Activated T-helper 2 cell treated with anti-CD3 and anti-CD28 coated beads, Interferon-gamma antibody, Interleukin-2, Interleukin-4, amounts not matched to agents 10 μg/mL and 5 μg/mL and 100 μg/mL, durations not matched to agents 14 hours and 24 hours and 36 hours (primary cell): ENCODE measurements at regions of chr6 and their contacts with region 1.

Region 1: GRCh38 chr6:79078075-79079025 is at the start of gene PHIP:
- DNase-seq: peak; percentile 91
- H3K4me3 Mint-ChIP-seq: peak within 1 kb of the TSS; percentile 90
- H3K27ac Mint-ChIP-seq: peak within 1 kb of the TSS; percentile 97
- H3K4me1 Mint-ChIP-seq: peaks cover 35% of the 10 kb centered on the region
- H3K27me3 Mint-ChIP-seq: peaks cover 16% of the 10 kb centered on the region
- total RNA-seq, gene PHIP: 35.2 TPM in 2 replicates

Region 2: DNA sequence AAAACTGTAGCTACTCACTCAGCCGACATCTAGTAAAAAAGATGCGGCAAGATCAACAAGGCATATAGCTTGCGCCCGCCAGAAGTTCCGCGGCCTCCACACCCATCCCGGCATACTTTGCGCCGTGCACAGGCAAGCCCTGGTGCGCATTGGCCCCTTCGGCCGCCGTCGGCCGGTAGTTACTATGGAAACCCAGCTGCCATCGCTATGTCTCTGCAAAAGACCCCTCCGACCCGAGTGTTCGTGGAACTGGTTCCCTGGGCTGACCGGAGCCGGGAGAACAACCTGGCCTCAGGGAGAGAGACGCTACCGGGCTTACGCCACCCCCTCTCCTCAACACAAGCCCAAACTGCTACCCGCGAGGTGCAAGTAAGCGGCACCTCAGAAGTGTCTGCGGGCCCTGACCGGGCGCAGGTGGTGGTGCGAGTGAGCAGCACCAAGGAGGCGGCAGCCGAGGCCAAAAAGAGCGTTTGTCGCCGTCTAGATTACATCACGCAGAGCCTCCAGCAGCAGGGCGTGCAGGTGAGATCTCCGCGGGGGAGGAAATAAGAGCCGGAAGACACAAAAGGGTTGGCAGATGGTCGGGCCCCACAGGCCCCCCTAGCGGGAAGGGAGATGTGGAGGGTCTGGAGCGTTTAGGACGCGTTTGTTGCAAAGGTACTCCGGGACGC is 210.8 kb before region 1 on chr6 and contains the start of gene IRAK1BP1:
- intact Hi-C with region 1: loop called (anchors 1 kb)
- DNase-seq: peak; percentile 82
- H3K4me3 Mint-ChIP-seq: peak within 1 kb of the TSS; percentile 90
- H3K27ac Mint-ChIP-seq: peak within 1 kb of the TSS; percentile 93
- H3K4me1 Mint-ChIP-seq: peaks cover 12% of the 10 kb centered on the region
- H3K27me3 Mint-ChIP-seq: no peaks in the 10 kb centered on the region
- total RNA-seq, gene IRAK1BP1: 2.3 and 2.6 TPM in 2 replicates

Region 3: DNA sequence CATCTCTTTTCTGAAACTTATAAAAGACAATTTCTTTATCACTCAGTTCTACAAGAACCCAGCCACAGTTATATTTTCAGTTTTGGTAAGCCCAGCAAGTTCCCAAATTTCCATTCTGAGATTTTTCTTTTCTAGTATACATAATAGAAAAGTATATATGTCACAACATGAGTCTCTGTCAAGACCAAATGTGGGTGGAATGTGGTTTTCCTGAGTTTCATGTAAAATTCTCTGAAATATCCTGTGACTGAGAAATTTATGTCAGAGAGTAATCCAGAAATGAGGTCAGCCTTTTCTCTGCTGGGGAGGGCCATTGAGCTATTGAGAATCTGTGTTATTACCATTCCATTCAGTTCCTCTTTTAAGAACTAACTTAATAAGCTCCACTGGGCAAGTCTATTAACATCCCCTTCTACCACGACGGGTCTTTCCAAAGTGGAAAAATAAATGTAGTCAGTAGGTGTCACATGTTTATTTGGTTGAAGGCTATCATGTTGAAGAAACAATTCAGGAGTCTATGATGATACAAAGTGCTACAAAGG is 256.9 kb after region 1 on chr6:
- intact Hi-C with region 1: loop called (anchors 10 kb)
- DNase-seq: no peak
- H3K4me3 Mint-ChIP-seq: no peak overlapping the region
- H3K27ac Mint-ChIP-seq: no peak overlapping the region
- H3K4me1 Mint-ChIP-seq: peaks cover 21% of the 10 kb centered on the region
- H3K27me3 Mint-ChIP-seq: peaks cover 2% of the 10 kb centered on the region

Region 4: DNA sequence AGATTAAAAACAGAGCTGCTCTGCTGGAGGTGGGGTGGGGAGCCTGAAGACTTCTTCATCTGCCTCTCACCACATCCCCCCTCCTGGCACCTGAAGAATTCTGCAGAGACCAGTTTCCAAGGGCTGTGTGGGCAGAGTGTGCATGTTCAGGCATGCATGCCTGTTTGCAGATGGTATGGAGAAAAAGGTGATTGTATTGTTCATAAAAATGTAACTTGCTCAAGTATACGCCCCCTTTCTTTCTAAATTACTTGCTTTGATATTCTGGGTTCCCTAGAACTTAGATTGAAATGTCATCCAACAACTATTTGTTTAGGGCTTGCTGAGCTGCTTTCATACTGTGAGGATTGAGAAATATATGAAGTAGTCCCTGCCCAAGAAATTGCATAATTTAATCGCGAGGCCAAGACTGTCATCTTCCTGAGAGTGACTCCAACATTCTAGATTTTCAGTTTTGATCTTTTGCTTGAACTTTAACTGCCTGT is 375.2 kb after region 1 on chr6:
- intact Hi-C with region 1: loop called (anchors 5 kb)
- DNase-seq: no peak
- H3K4me3 Mint-ChIP-seq: no peak overlapping the region
- H3K27ac Mint-ChIP-seq: peak overlapping the region; percentile 50
- H3K4me1 Mint-ChIP-seq: peaks cover 7% of the 10 kb centered on the region
- H3K27me3 Mint-ChIP-seq: no peaks in the 10 kb centered on the region

Region 5: DNA sequence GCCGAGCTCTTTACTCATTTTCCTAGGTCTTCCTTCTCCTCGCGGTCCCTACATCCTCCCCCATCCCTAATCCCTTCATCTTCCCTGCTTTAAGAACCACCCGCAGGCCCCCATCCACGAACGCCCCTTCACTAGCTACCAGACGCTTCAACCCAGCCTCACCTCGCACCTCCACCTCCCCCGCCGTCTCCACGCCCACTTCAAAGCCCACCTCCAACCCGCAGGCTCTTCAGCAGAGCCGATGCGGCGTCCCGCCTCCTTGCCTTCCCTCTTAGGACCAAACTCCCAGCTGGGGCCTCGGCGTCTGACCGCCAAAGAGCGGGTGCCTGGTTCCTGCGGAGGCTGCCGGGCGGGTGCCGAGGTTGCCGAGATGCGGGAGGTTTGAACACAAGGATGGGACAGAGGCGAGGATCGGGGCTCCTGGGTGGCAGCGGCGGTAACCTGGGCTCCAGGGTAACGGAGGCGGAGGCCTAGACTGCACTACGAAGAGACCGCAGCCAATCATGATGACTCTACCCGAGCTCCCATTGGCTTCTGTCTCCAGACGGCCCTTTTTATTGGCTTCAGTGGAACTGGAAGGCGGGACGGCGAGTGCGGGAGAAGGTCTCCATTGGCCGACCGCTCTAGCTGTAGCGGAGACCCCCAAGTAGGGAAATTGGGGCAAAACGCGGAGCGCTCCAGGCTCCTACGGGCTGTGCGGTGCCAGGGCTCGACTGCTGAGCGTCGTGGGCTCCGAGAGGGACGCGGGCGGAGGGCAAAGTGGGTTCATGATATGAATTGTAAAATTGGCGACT is 458.8 kb after region 1 on chr6 and contains the start of gene LCA5:
- intact Hi-C with region 1: loop called (anchors 2 kb)
- DNase-seq: peak; percentile 82
- H3K4me3 Mint-ChIP-seq: no peak within 1 kb of the TSS
- H3K27ac Mint-ChIP-seq: no peak within 1 kb of the TSS
- H3K4me1 Mint-ChIP-seq: no peaks in the 10 kb centered on the region
- H3K27me3 Mint-ChIP-seq: peaks cover 28% of the 10 kb centered on the region
- total RNA-seq, gene LCA5: 0.09 and 0.18 TPM in 2 replicates